Endothelial cell of umbilical vein (primary cell): ENCODE measurements at regions of chr20 and their contacts with region 1.

Region 1: GRCh38 chr20:17654649-17655285 is 27.3 kb downstream of the RRBP1 start:
- DNase-seq: peak; percentile 66
- H3K4me3 ChIP-seq: no peak overlapping the region
- H3K27ac ChIP-seq: peak overlapping the region; percentile 29
- H3K4me1 ChIP-seq: peaks cover 5% of the 10 kb centered on the region
- H3K27me3 ChIP-seq: no peaks in the 10 kb centered on the region
- CTCF ChIP-seq: peak; percentile 75 to 78
- POLR2A ChIP-seq: no peak

Region 2: DNA sequence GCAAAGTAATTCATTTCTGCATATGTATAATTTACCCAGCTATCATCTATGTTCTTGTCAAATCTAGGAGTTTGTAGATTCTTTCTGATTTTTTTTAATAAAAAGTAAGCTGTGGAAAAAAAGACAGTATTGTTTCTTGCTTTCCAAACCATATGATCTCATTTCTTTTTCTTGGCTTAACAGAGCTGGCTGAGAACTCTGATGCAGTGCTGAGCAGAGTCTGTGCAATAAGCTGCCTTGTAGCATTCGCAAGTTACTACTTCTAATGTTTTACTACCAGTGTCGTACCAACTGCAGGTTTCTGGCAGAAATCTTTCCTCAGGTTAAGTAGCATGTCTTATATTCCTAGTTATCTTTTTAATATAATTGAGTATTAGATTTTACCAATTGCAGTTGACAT is 11.7 kb after region 1 on chr20:
- CTCF ChIA-PET with region 1: interaction called, 28 read pairs
- POLR2A ChIA-PET with region 1: no interaction called
- dilution Hi-C with region 1: no loop called
- intact Hi-C with region 1: loop called (anchors 1 kb)
- DNase-seq: peak; percentile 76
- H3K4me3 ChIP-seq: no peak overlapping the region
- H3K27ac ChIP-seq: peak overlapping the region; percentile 89
- H3K4me1 ChIP-seq: peaks cover 27% of the 10 kb centered on the region
- H3K27me3 ChIP-seq: no peaks in the 10 kb centered on the region
- CTCF ChIP-seq: no peak
- POLR2A ChIP-seq: no peak